ENCODE measurements at regions of chr1 and their contacts with region 1.

Region 1: GRCh38 chr1:229479660-229480399 is 28.3 kb downstream of the NUP133 start:
- DNase-seq: no peak
- ATAC-seq: peak; percentile 14 to 51 (median 47)
- H3K4me3 ChIP-seq: no peak overlapping the region
- H3K4me3 Mint-ChIP-seq: no peak overlapping the region
- H3K27ac ChIP-seq: peak overlapping the region; percentile 60
- H3K27ac Mint-ChIP-seq: peak overlapping the region; percentile 52 to 71
- H3K4me1 ChIP-seq: peaks cover 3% of the 10 kb centered on the region
- H3K4me1 Mint-ChIP-seq: peaks cover 26 to 29% of the 10 kb centered on the region in 2 donors
- H3K27me3 ChIP-seq: no peaks in the 10 kb centered on the region
- H3K27me3 Mint-ChIP-seq: no peaks in the 10 kb centered on the region
- CTCF ChIP-seq: no peak

Region 2: DNA sequence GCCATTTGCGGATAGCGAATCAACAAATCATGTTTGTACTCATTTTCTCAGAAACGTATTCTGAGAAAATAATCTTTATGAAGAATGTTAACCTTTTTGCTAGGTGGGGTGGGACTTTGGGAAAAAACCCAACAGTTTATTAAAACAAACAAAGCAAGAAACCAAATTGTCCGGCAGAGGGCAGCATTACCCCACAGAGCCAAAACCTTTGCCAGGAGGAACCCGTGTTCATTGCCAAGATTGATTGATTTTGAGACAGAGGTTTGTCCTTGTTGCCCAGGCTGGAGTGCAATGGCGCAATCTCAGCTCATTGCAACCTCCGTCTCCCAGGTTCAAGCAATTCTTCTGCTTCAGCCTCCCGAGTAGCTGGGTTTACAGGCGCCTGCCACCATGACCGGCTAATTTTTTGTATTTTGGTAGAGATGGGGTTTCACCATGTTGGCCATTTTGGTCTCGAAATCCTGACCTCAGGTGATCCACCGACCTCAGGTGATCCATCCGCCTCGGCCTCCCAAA is 815.4 kb before region 1 on chr1:
- intact Hi-C with region 1: loop called (anchors 1 kb)
- DNase-seq: peak; percentile 64 to 89
- ATAC-seq: peak; percentile 46 to 65 (median 61)
- H3K4me3 ChIP-seq: no peak overlapping the region
- H3K4me3 Mint-ChIP-seq: no peak overlapping the region
- H3K27ac ChIP-seq: no peak overlapping the region
- H3K27ac Mint-ChIP-seq: no peak overlapping the region
- H3K4me1 ChIP-seq: peaks cover 3% of the 10 kb centered on the region
- H3K4me1 Mint-ChIP-seq: no peaks in the 10 kb centered on the region
- H3K27me3 ChIP-seq: no peaks in the 10 kb centered on the region
- H3K27me3 Mint-ChIP-seq: peaks cover 8 to 11% of the 10 kb centered on the region in 2 donors
- CTCF ChIP-seq: peak; percentile 86

Region 3: DNA sequence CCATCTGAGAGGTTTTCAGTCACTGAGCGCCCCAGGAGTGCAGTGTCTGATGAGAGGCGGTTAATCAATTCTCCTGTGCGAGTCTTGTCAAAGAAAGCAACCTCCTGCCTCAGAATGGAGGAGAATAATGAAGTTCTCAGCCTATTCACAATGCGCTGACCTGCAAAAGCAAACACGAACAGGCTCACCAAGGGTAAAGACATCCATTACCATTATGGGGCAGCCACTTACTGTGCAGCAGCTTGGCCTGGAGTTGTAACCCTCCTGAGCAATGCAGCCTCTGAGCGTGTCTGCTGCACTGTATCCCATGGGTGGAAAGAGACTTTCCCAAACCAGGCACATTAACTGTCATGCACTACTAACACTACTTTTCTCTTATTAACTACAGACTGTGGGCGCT is 67.7 kb after region 1 on chr1:
- intact Hi-C with region 1: no loop called
- DNase-seq: no peak
- ATAC-seq: no peak
- H3K4me3 ChIP-seq: no peak overlapping the region
- H3K4me3 Mint-ChIP-seq: no peak overlapping the region
- H3K27ac ChIP-seq: no peak overlapping the region
- H3K27ac Mint-ChIP-seq: peak overlapping the region in 1 of 2 donors; percentile 22
- H3K4me1 ChIP-seq: no peaks in the 10 kb centered on the region
- H3K4me1 Mint-ChIP-seq: peaks cover 10 to 18% of the 10 kb centered on the region in 2 donors
- H3K27me3 ChIP-seq: no peaks in the 10 kb centered on the region
- H3K27me3 Mint-ChIP-seq: no peaks in the 10 kb centered on the region
- CTCF ChIP-seq: no peak

Measured in natural killer cell (primary cell).